ENCODE measurements at regions of chr1 and their contacts with region 1.

Region 1: DNA sequence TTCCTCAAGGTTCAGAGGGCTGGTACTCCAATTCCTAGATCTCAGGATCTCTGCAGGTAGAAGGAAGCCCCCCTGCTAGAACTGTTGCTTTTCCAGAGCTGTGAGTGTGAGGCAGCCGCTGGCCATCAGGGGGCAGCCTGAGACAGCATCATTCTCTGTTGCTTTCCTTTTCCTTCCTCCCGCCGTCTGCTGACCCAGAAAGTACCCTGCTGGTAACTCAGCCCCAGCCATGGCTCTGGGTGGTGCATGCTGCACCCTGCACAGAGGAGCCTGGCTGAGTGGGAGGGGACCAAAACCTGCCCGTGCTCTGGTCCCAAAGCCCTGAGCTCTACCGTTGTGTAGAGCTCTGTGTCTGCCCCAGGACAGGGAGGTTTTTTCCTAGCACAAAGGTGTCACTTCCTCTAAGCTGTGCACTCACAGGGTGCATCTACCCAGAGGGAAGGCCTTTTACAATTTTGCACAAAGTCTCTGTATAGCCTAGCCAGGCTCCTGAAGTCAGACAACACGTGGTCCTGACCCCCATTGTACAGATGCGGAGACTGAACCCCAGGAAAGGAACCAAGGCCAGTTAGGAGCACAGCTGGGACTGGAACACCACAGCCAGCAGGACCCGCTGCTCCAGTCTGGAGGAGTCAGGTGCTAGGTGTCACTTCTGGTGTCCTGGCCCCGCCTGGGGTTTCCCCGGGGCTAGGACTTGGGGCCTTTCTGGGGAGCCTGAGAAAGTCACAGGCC is 5.6 kb upstream of the FAM131C start:
- DNase-seq: peak; percentile 70
- ATAC-seq: peak; percentile 81
- H3K4me3 ChIP-seq: peak overlapping the region in 1 of 3 experiments; percentile 56; a peak in 2 of 6 replicates
- H3K27ac ChIP-seq: no peak overlapping the region
- H3K4me1 ChIP-seq: peaks cover 57% of the 10 kb centered on the region
- H3K27me3 ChIP-seq: peaks cover 0 to 21% of the 10 kb centered on the region in 2 experiments; a peak in 4 of 5 replicates
- CTCF ChIP-seq: peak; percentile 95
- EP300 ChIP-seq: no peak
- POLR2A ChIP-seq: no peak
- RAD21 ChIP-seq: peak; percentile 96

Region 2: GRCh38 chr1:16111771-16112595 is 32.9 kb after region 1 on chr1:
- CTCF ChIA-PET with region 1: no interaction called
- POLR2A ChIA-PET with region 1: no interaction called
- in situ Hi-C with region 1: loop called (anchors 5 kb)
- intact Hi-C with region 1: loop called (anchors 2 kb)
- DNase-seq: no peak
- ATAC-seq: peak; percentile 30
- H3K4me3 ChIP-seq: peak overlapping the region in 1 of 3 experiments; percentile 22; a peak in 1 of 6 replicates
- H3K27ac ChIP-seq: no peak overlapping the region
- H3K4me1 ChIP-seq: peaks cover 70% of the 10 kb centered on the region
- H3K27me3 ChIP-seq: peaks cover 5 to 20% of the 10 kb centered on the region in 2 experiments; a peak in 4 of 5 replicates
- CTCF ChIP-seq: no peak
- EP300 ChIP-seq: no peak
- POLR2A ChIP-seq: no peak
- RAD21 ChIP-seq: no peak

Region 3: GRCh38 chr1:16146279-16147155 is 67.4 kb after region 1 on chr1:
- CTCF ChIA-PET with region 1: no interaction called
- POLR2A ChIA-PET with region 1: interaction called, 3 read pairs
- in situ Hi-C with region 1: no loop called
- intact Hi-C with region 1: loop called (anchors 10 kb)
- DNase-seq: peak; percentile 90
- ATAC-seq: peak; percentile 57
- H3K4me3 ChIP-seq: peak overlapping the region in 2 of 3 experiments; percentile 15 to 51; a peak in 3 of 6 replicates
- H3K27ac ChIP-seq: peak overlapping the region; percentile 76
- H3K4me1 ChIP-seq: peaks cover 100% of the 10 kb centered on the region
- H3K27me3 ChIP-seq: no peaks in the 10 kb centered on the region
- CTCF ChIP-seq: peak; percentile 14; the same call in 1 of the 2 replicates
- EP300 ChIP-seq: peak in 1 of 2 experiments; percentile 75; a peak in 2 of 4 replicates
- POLR2A ChIP-seq: peak; percentile 23 to 65
- RAD21 ChIP-seq: no peak

Region 4: DNA sequence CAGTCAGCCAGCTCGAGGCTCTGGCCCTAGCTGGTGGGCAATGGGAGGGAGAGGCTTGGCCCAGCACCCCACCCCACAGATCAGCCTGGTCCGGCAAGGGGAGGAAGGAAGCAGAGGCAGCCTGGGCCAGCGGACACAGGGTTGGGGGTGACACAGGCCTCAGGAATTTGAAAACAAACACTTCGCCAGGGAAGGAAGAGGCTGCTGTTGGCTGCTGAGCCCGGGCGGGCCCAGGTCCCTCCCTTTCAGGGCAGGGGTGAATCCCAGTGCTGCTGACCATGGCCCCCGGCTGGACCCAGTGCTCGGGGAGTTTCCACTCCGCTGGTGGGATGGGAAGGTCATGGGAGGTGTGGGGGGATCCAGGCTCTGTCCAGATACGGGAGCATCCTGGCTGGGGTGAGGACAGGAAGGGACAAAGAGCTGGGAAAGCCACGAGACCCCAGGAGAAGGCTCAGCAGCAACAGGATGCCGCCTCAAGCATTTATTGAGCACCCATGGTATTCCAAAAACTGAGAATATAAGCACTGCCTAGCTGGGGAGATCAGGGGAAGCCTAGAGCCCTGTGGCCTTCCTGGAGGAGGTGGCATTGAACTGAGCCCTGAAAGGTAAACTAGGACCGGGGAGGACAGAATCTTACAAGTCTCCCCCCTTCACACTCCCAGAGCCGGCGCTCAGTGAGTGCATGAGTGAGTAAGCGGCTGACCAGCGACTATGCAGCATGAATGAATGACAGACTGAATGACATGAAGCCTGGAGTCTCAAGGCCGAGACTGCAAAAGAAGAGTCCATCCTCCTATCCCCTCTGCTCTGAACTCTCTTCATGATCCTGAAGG is 103.0 kb after region 1 on chr1:
- CTCF ChIA-PET with region 1: interaction called, 98 read pairs
- POLR2A ChIA-PET with region 1: interaction called, 4 read pairs
- in situ Hi-C with region 1: loop called (anchors 5 kb)
- intact Hi-C with region 1: loop called (anchors 1 kb)
- DNase-seq: peak; percentile 87
- ATAC-seq: peak; percentile 89
- H3K4me3 ChIP-seq: peak overlapping the region; percentile 18 to 64 (median 30); a peak in 4 of 6 replicates
- H3K27ac ChIP-seq: peak overlapping the region; percentile 76
- H3K4me1 ChIP-seq: peaks cover 90% of the 10 kb centered on the region
- H3K27me3 ChIP-seq: no peaks in the 10 kb centered on the region
- CTCF ChIP-seq: 0 out of 2 replicates have a peak, but pooled peaks have one; percentile 10
- EP300 ChIP-seq: peak; percentile 15 to 76; a peak in 3 of 4 replicates
- POLR2A ChIP-seq: peak; percentile 46 to 47; a peak in 2 of 4 replicates
- RAD21 ChIP-seq: no peak

Region 5: GRCh38 chr1:16187748-16188401 is 108.8 kb after region 1 on chr1:
- CTCF ChIA-PET with region 1: interaction called, 98 read pairs
- POLR2A ChIA-PET with region 1: interaction called, 4 read pairs
- in situ Hi-C with region 1: loop called (anchors 5 kb)
- intact Hi-C with region 1: loop called (anchors 1 kb)
- DNase-seq: peak; percentile 52
- ATAC-seq: peak; percentile 70
- H3K4me3 ChIP-seq: no peak overlapping the region
- H3K27ac ChIP-seq: no peak overlapping the region
- H3K4me1 ChIP-seq: peaks cover 64% of the 10 kb centered on the region
- H3K27me3 ChIP-seq: peaks cover 2 to 5% of the 10 kb centered on the region in 2 experiments; a peak in 2 of 5 replicates
- CTCF ChIP-seq: peak; percentile 99
- EP300 ChIP-seq: no peak
- POLR2A ChIP-seq: no peak
- RAD21 ChIP-seq: peak; percentile 98

Region 6: DNA sequence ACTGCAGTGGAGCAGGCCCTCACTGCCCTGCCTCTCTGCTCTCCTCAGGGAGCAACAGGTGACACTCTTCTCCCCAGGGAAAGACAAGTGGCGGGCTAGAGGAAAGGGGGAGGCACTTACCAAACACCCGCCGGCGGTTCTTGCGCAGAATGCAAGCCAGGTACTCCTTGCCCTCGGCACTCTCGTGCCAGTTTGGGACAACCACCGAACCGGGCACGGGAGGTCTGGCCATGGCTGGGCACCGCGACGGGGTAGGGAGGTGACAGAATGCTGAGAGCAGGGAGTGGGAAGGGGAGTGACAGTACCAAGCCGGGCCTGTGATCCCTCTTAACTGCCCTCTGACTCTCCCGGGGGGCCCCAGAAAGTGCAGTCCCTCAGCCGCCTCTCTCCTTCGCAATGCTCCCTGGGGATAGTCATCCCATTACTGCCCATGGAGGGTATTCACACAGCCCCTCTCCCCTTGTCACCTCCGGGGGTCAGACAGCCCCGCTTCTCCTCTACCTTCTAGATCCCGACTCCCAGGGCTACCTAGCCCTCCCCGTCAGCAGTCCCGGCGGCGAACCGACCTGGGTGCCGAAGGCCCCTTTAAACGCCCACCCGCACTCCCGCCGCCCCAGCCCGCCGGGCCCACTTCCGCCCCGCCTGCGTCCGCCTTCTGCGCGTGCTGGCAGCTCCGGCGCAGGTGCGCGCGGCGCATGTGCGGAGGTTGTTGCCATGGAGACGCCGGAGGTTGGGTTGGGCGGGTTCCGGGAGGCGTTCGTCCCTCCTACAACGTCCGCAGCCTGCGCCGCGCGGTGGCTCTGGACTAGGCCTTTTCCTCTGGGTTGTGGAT is 157.6 kb after region 1 on chr1 and contains the start of gene CPLANE2:
- CTCF ChIA-PET with region 1: no interaction called
- POLR2A ChIA-PET with region 1: no interaction called
- in situ Hi-C with region 1: loop called (anchors 5 kb)
- intact Hi-C with region 1: loop called (anchors 2 kb)
- DNase-seq: peak; percentile 79
- ATAC-seq: peak; percentile 85
- H3K4me3 ChIP-seq: peak within 1 kb of the TSS; percentile 66 to 79 (median 67)
- H3K27ac ChIP-seq: peak within 1 kb of the TSS; percentile 31
- H3K4me1 ChIP-seq: peaks cover 50% of the 10 kb centered on the region
- H3K27me3 ChIP-seq: no peaks in the 10 kb centered on the region
- CTCF ChIP-seq: peak; percentile 40
- EP300 ChIP-seq: no peak
- POLR2A ChIP-seq: peak; percentile 48 to 63; a peak in 3 of 4 replicates
- RAD21 ChIP-seq: no peak
- total RNA-seq, gene CPLANE2: 0.98 and 1.6 TPM in 2 replicates

Region 7: GRCh38 chr1:16243936-16244649 is 165.0 kb after region 1 on chr1:
- CTCF ChIA-PET with region 1: interaction called, 9 read pairs
- POLR2A ChIA-PET with region 1: interaction called, 3 read pairs
- in situ Hi-C with region 1: loop called (anchors 5 kb)
- intact Hi-C with region 1: loop called (anchors 2 kb)
- DNase-seq: peak; percentile 68
- ATAC-seq: peak; percentile 64
- H3K4me3 ChIP-seq: no peak overlapping the region
- H3K27ac ChIP-seq: no peak overlapping the region
- H3K4me1 ChIP-seq: peaks cover 30% of the 10 kb centered on the region
- H3K27me3 ChIP-seq: no peaks in the 10 kb centered on the region
- CTCF ChIP-seq: peak; percentile 88
- EP300 ChIP-seq: no peak
- POLR2A ChIP-seq: no peak
- RAD21 ChIP-seq: peak; percentile 81